ENCODE measurements at regions of chr17 and their contacts with region 1.

Region 1: DNA sequence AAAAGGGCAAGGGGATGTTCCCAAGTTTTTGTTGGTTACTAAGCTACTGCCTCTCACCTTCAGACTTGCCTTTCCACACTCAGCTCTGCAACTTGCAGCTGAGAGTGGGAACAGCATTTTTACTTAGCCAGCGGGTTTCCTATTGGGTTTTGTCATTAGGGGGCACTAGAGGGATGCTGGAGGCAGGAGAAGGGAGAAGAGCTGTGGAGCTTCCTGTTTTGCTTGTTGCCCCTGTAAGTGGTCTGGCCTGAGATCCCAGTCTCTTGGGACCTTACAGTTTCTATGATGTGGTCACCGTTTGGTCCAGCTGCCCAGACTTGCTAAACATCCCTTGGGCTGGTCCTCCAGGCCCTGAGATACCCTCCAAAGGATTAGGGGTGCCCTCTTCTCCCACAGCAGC is 209.6 kb upstream of the NLRP1 start:
- DNase-seq: peak; percentile 15
- H3K4me3 Mint-ChIP-seq: no peak overlapping the region
- H3K27ac Mint-ChIP-seq: no peak overlapping the region
- H3K4me1 Mint-ChIP-seq: no peaks in the 10 kb centered on the region
- H3K27me3 Mint-ChIP-seq: peaks cover 29% of the 10 kb centered on the region

Region 2: GRCh38 chr17:6421700-6422604 is 628.1 kb after region 1 on chr17:
- CTCF ChIA-PET with region 1: no interaction called
- intact Hi-C with region 1: loop called (anchors 5 kb)
- DNase-seq: peak; percentile 84
- H3K4me3 Mint-ChIP-seq: no peak overlapping the region
- H3K27ac Mint-ChIP-seq: no peak overlapping the region
- H3K4me1 Mint-ChIP-seq: peaks cover 2% of the 10 kb centered on the region
- H3K27me3 Mint-ChIP-seq: peaks cover 6% of the 10 kb centered on the region